ENCODE measurements at regions of chr2 and their contacts with region 1.

Region 1: DNA sequence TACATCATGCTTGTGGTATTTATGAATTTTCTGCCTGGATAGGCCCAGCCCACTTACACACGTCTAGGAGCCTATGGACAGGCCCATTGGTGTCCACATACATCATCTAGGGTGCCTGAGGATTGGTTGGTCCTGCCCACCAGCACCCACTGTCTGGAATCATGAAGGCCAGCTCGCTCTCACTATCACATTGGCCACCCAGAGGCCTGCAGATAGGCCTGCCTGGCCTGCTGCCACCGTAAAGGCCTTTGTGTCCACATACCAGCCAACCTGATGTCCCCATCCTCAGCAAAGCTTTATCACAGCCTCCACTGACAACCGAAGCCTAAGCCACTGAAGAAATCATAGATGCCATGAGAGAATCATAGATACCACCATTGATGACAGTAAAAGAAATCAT is 40.2 kb downstream of the METTL21A start:
- DNase-seq: no peak
- H3K4me3 Mint-ChIP-seq: no peak overlapping the region
- H3K27ac Mint-ChIP-seq: no peak overlapping the region
- H3K4me1 Mint-ChIP-seq: peaks cover 36% of the 10 kb centered on the region
- H3K27me3 Mint-ChIP-seq: no peaks in the 10 kb centered on the region

Region 2: GRCh38 chr2:207565736-207566500 is 19.0 kb before region 1 on chr2:
- intact Hi-C with region 1: loop called (anchors 2 kb)
- DNase-seq: no peak
- H3K4me3 Mint-ChIP-seq: no peak overlapping the region
- H3K27ac Mint-ChIP-seq: peak overlapping the region; percentile 5
- H3K4me1 Mint-ChIP-seq: peaks cover 12% of the 10 kb centered on the region
- H3K27me3 Mint-ChIP-seq: no peaks in the 10 kb centered on the region

Region 3: DNA sequence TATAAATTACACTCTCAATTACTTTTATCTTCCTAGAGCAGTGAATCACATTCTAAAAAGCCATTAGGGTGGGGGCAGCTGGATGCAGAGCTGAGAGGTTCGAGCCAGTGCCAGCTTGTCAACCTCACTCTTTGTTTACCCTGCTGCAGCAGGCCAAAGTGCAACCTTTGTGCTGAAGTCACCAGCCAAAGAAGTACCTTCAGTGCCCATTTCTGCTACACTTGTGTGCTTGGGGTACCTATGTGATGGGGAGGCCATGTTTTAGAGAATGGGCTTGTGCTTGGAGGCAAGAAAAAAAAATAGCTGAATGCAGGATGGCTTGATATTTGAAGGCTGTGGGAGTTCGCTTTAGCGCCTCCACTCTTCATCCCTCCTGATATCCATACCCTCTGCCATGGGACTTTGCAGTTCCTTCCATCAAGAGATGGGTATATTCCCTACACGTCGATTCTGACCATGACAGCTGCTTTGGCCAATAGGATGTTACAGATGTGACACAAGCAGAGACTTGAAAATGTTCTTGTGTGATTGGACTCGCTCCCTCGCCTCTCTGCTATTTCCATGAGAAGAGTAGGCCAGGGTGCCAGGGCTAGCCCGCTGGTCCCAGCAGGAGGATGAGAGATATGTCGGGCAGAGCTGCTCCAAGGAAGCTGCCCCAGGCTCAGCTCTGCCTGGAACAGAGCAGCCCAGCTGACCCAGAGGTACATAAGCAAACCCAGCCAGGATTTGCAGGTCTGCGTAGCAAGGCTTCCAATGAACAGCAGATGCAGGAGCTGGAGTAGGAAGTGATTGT is 197.5 kb after region 1 on chr2:
- intact Hi-C with region 1: no loop called
- DNase-seq: no peak
- H3K4me3 Mint-ChIP-seq: no peak overlapping the region
- H3K27ac Mint-ChIP-seq: no peak overlapping the region
- H3K4me1 Mint-ChIP-seq: no peaks in the 10 kb centered on the region
- H3K27me3 Mint-ChIP-seq: peaks cover 6% of the 10 kb centered on the region

Measured in activated T-helper 1 cell treated with anti-CD3 and anti-CD28 coated beads, Interleukin-12 subunit alpha, Interleukin-12 subunit beta, Interleukin-2, Interleukin-4 antibody, amounts not matched to agents 30 ng/mL and 10 ng/mL and 1 ng/mL, durations not matched to agents 14 hours and 24 hours and 36 hours (primary cell).